A549 (cell line): ENCODE measurements at regions of chr20 and their contacts with region 1.

Region 1: GRCh38 chr20:35994994-35995453 is 26.6 kb downstream of the CNBD2 start:
- DNase-seq: peak; percentile 87 to 91
- ATAC-seq: peak; percentile 94 to 97
- H3K4me3 ChIP-seq: no peak overlapping the region
- H3K27ac ChIP-seq: peak overlapping the region; percentile 39 to 55; a peak in 1 of 6 replicates
- H3K4me1 ChIP-seq: peaks cover 23% of the 10 kb centered on the region
- CTCF ChIP-seq: peak; percentile 93
- EP300 ChIP-seq: no peak
- POLR2A ChIP-seq: no peak
- RAD21 ChIP-seq: peak; percentile 96 to 97

Region 2: GRCh38 chr20:35854713-35855434 is 140.2 kb before region 1 on chr20:
- CTCF ChIA-PET with region 1: no interaction called
- POLR2A ChIA-PET with region 1: no interaction called
- DNase-seq: peak in 1 of 2 experiments; percentile 57
- ATAC-seq: peak in 1 of 2 experiments; percentile 53; a peak in 3 of 6 replicates
- H3K4me3 ChIP-seq: no peak overlapping the region
- H3K27ac ChIP-seq: peak overlapping the region; percentile 23 to 64; a peak in 5 of 6 replicates
- H3K4me1 ChIP-seq: peaks cover 28% of the 10 kb centered on the region
- CTCF ChIP-seq: no peak
- EP300 ChIP-seq: peak in 1 of 2 experiments; percentile 69; a peak in 2 of 5 replicates
- POLR2A ChIP-seq: no peak
- RAD21 ChIP-seq: no peak

Region 3: DNA sequence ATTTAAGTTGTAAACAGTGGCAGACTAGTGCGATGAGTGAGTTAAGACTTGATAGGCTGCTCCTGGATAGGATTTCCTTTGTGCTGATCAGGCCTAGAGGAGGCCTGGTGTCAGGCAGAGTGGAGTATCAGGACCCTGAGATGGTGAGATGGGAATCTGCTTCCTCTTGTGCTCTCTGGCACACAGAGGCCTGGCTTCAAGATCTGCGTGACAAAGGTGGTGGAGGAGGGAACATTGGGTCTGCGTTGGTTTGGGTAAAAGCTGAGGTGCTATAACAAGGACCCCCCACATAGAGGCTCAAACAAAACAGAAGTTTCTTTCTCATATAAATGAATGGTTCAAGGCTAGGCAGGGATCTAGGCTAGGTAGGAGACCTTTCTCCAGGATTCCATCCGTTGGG is 61.0 kb before region 1 on chr20:
- CTCF ChIA-PET with region 1: no interaction called
- POLR2A ChIA-PET with region 1: no interaction called
- DNase-seq: no peak
- ATAC-seq: no peak
- H3K4me3 ChIP-seq: no peak overlapping the region
- H3K27ac ChIP-seq: no peak overlapping the region
- H3K4me1 ChIP-seq: no peaks in the 10 kb centered on the region
- CTCF ChIP-seq: no peak
- EP300 ChIP-seq: no peak
- POLR2A ChIP-seq: no peak
- RAD21 ChIP-seq: no peak

Region 4: DNA sequence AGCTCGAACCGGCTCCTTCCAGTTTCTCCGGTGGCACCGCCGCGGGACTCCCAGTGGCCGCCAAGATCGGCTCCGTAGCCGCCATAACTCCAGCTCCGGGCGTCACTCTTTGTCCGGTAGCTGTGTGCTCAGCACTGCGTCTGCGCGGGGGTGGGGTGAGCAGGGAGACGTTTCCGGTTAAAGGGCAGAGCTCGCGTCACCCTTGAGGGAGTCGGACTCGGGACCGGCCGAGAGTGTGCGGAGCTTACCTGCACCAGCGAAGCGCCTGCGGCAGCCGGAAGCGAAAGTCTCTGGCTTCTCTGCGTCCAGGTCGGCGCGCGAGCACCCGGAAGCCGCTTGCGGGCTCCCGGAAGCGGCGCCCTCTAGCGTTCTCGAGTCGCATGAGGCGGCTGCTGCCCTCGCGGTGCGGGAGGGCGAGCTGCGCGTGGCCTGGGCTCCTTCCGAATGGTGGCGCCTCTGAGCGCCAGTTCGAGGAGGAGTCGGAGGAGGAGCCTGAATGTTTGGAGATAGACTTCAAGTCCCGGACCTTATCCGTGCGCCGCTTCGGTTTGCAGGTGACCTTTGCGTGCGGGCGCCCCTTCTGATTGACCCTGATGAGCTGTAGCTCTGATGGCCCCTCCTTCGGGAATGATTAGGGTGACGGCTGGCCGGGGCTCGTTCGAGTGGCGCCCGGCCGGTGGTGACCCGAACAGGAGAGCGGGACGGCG is 40.7 kb before region 1 on chr20 and contains the start of gene SCAND1:
- CTCF ChIA-PET with region 1: interaction called, 34 read pairs
- POLR2A ChIA-PET with region 1: interaction called, 8 read pairs
- DNase-seq: peak; percentile 95 to 99
- ATAC-seq: peak; percentile 94
- H3K4me3 ChIP-seq: peak within 1 kb of the TSS; percentile 95
- H3K27ac ChIP-seq: peak within 1 kb of the TSS; percentile 96 to 97
- H3K4me1 ChIP-seq: peaks cover 15% of the 10 kb centered on the region
- CTCF ChIP-seq: peak; percentile 99
- EP300 ChIP-seq: no peak
- POLR2A ChIP-seq: peak; percentile 85
- RAD21 ChIP-seq: peak; percentile 46 to 69; a peak in 4 of 5 replicates
- polyA plus RNA-seq, gene SCAND1: 9.1 and 10.2 TPM in 2 replicates

Region 5: GRCh38 chr20:36010825-36011224 is 15.8 kb after region 1 on chr20:
- CTCF ChIA-PET with region 1: interaction called, 40 read pairs
- POLR2A ChIA-PET with region 1: no interaction called
- DNase-seq: no peak
- ATAC-seq: no peak
- H3K4me3 ChIP-seq: no peak overlapping the region
- H3K27ac ChIP-seq: peak overlapping the region in 1 of 2 experiments; percentile 12; a peak in 1 of 6 replicates
- H3K4me1 ChIP-seq: no peaks in the 10 kb centered on the region
- CTCF ChIP-seq: no peak
- EP300 ChIP-seq: no peak
- POLR2A ChIP-seq: no peak
- RAD21 ChIP-seq: no peak

Region 6: DNA sequence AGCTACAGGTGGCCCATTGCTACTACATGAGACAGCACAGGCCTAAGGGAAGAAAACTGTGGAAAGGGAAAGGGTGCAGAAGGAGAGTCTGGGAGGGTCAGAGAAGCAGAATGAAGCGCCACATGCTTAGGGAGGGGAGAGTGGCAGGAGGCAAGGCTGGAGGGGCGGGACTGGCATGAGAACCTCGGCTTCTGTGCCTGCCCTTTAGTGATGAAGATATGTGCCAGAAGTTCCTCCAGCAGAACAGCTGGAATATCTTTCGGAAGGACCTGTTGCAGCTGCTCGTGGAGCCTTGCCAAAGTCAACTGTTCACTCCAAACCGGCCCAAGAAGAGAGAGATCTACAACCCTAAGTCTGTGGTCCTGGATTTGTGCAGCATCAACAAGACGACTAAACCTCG is 35.1 kb after region 1 on chr20:
- CTCF ChIA-PET with region 1: interaction called, 13 read pairs
- POLR2A ChIA-PET with region 1: no interaction called
- DNase-seq: no peak
- ATAC-seq: 0 out of 6 replicates have a peak, but pooled peaks of 1 of the 2 experiments have one; percentile 10
- H3K4me3 ChIP-seq: no peak overlapping the region
- H3K27ac ChIP-seq: no peak overlapping the region
- H3K4me1 ChIP-seq: no peaks in the 10 kb centered on the region
- CTCF ChIP-seq: no peak
- EP300 ChIP-seq: no peak
- POLR2A ChIP-seq: no peak
- RAD21 ChIP-seq: no peak

Region 7: GRCh38 chr20:36093025-36093803 is 98.2 kb after region 1 on chr20:
- CTCF ChIA-PET with region 1: interaction called, 11 read pairs
- POLR2A ChIA-PET with region 1: interaction called, 8 read pairs
- DNase-seq: peak in 1 of 2 experiments; percentile 82
- ATAC-seq: peak; percentile 60 to 68
- H3K4me3 ChIP-seq: peak overlapping the region; percentile 97
- H3K27ac ChIP-seq: peak overlapping the region; percentile 93 to 95
- H3K4me1 ChIP-seq: peaks cover 59% of the 10 kb centered on the region
- CTCF ChIP-seq: no peak
- EP300 ChIP-seq: no peak
- POLR2A ChIP-seq: peak; percentile 29
- RAD21 ChIP-seq: no peak

Region 8: GRCh38 chr20:36128463-36129159 is 133.6 kb after region 1 on chr20:
- CTCF ChIA-PET with region 1: interaction called, 516 read pairs
- POLR2A ChIA-PET with region 1: no interaction called
- DNase-seq: peak in 1 of 2 experiments; percentile 45
- ATAC-seq: peak; percentile 58 to 75; a peak in 4 of 6 replicates
- H3K4me3 ChIP-seq: no peak overlapping the region
- H3K27ac ChIP-seq: peak overlapping the region; percentile 38 to 80; a peak in 4 of 6 replicates
- H3K4me1 ChIP-seq: peaks cover 29% of the 10 kb centered on the region
- CTCF ChIP-seq: no peak
- EP300 ChIP-seq: no peak
- POLR2A ChIP-seq: no peak
- RAD21 ChIP-seq: no peak

Region 9: GRCh38 chr20:36153736-36154699 is 159.0 kb after region 1 on chr20:
- CTCF ChIA-PET with region 1: interaction called, 120 read pairs
- POLR2A ChIA-PET with region 1: no interaction called
- DNase-seq: peak; percentile 60 to 72
- ATAC-seq: peak; percentile 83 to 89
- H3K4me3 ChIP-seq: peak overlapping the region; percentile 80
- H3K27ac ChIP-seq: peak overlapping the region; percentile 87 to 94
- H3K4me1 ChIP-seq: peaks cover 64% of the 10 kb centered on the region
- CTCF ChIP-seq: no peak
- EP300 ChIP-seq: no peak
- POLR2A ChIP-seq: no peak
- RAD21 ChIP-seq: no peak